ENCODE measurements at regions of chr6 and their contacts with region 1.

Region 1: GRCh38 chr6:26031595-26032339 is 55.5 kb upstream of the HFE start:
- DNase-seq: peak; percentile 99
- ATAC-seq: peak; percentile 60
- H3K4me3 ChIP-seq: peak overlapping the region; percentile 83
- H3K27ac ChIP-seq: peak overlapping the region; percentile 82
- H3K4me1 ChIP-seq: peaks cover 40% of the 10 kb centered on the region
- H3K27me3 ChIP-seq: no peaks in the 10 kb centered on the region
- CTCF ChIP-seq: no peak

Region 2: GRCh38 chr6:25927756-25928216 is 104.0 kb before region 1 on chr6:
- CTCF ChIA-PET with region 1: no interaction called
- POLR2A ChIA-PET with region 1: no interaction called
- intact Hi-C with region 1: no loop called
- DNase-seq: no peak
- ATAC-seq: no peak
- H3K4me3 ChIP-seq: no peak overlapping the region
- H3K27ac ChIP-seq: no peak overlapping the region
- H3K4me1 ChIP-seq: no peaks in the 10 kb centered on the region
- H3K27me3 ChIP-seq: no peaks in the 10 kb centered on the region
- CTCF ChIP-seq: no peak

Region 3: DNA sequence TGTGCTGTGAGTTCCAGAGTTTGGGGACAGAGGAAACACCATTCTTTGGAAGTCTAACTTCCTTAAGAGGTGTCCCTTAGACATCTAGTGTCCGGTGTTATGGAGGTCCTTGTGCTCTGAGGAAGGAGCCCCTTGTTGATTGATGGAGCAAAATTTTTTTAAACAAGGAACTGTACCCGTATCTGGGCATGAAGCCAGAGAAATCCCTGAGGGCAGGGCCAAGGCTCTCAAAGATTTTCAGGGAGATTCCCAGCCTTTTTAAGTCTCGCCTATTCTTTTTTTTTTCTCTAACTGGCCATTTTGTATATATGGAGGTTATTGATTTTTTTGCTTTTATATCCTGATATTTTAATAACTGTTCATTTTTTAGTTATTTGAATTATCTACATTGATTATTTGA is 23.3 kb before region 1 on chr6:
- CTCF ChIA-PET with region 1: no interaction called
- POLR2A ChIA-PET with region 1: no interaction called
- intact Hi-C with region 1: no loop called
- DNase-seq: no peak
- ATAC-seq: no peak
- H3K4me3 ChIP-seq: no peak overlapping the region
- H3K27ac ChIP-seq: no peak overlapping the region
- H3K4me1 ChIP-seq: no peaks in the 10 kb centered on the region
- H3K27me3 ChIP-seq: no peaks in the 10 kb centered on the region
- CTCF ChIP-seq: no peak

Region 4: DNA sequence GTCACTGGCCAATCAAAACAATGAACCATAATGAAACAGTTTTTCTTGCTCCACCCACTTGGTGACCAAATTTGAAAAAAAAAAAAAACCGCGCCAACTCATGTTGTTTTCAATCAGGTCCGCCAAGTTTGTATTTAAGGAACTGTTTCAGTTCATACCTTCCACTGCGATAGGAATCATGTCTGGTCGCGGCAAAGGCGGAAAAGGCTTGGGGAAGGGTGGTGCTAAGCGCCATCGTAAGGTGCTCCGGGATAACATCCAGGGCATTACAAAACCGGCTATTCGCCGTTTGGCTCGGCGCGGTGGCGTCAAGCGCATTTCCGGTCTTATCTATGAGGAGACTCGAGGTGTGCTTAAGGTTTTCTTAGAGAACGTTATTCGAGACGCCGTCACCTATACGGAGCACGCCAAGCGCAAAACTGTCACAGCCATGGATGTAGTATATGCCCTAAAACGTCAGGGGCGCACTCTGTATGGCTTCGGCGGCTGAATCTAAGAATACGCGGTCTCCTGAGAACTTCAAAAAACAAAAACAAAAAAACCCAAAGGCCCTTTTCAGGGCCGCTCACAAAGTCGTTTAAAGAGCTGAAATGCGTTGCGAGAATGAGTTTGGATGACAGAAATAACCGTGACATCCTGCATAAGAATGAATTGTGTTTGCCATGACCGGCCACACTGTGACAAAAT is 72.1 kb after region 1 on chr6:
- CTCF ChIA-PET with region 1: no interaction called
- POLR2A ChIA-PET with region 1: no interaction called
- intact Hi-C with region 1: loop called (anchors 2 kb)
- DNase-seq: peak; percentile 97
- ATAC-seq: peak; percentile 81
- H3K4me3 ChIP-seq: peak overlapping the region; percentile 68
- H3K27ac ChIP-seq: peak overlapping the region; percentile 84
- H3K4me1 ChIP-seq: peaks cover 28% of the 10 kb centered on the region
- H3K27me3 ChIP-seq: no peaks in the 10 kb centered on the region
- CTCF ChIP-seq: peak; percentile 46; the same call in 1 of the 2 replicates

Region 5: GRCh38 chr6:27809939-27810767 is 1778.4 kb after region 1 on chr6:
- CTCF ChIA-PET with region 1: no interaction called
- POLR2A ChIA-PET with region 1: interaction called, 3 read pairs
- intact Hi-C with region 1: loop called (anchors 2 kb)
- DNase-seq: peak; percentile 99
- ATAC-seq: peak; percentile 28
- H3K4me3 ChIP-seq: peak overlapping the region; percentile 76
- H3K27ac ChIP-seq: peak overlapping the region; percentile 65
- H3K4me1 ChIP-seq: peaks cover 28% of the 10 kb centered on the region
- H3K27me3 ChIP-seq: no peaks in the 10 kb centered on the region
- CTCF ChIP-seq: 0 out of 2 replicates have a peak, but pooled peaks have one; percentile 14

Measured in PC-3 (cell line).